ENCODE measurements at regions of chr1 and their contacts with region 1.

Region 1: DNA sequence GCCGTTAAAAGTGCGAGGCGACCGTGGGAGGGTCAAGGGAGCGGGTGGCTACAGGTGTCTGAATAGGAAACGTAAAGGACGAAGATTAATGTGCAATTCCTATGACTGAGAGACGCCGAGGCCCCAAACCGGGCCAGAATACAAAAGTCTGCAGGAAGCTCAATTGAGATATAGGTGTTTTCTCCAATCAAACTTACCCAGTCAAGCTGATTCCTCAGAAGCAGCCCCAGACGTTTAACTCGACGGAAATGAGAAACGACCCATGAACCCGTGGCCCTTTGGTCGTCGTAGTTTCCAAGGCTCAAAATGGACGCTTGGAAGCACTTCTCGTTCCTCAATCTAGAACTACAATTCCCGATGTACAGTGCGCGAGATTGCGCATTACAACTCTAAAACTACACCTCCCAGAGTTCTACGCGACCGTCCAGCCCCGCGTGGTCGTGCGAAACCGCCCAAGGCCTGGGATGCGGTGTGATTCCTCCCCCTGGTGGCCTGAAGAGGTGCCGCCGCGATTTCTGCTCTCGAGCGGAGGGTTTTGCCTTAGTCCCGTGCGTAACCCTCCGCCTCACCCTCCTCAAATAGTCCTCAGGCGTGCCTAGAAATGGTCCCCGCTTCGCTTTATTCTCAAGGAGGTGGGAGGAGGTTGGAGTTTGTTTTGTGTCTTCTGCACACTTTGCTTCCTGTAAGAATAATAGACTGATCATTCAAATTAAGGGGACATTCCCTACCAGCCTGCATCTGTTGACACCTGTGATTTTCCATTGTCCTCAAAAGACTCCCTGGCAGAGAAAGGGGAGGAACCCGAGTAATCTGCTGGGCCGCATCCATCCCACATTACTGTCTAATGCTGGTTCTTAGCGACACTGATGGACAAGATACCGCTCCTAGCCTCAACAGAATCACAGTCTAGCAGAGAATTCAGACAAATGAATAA is at the start of gene PAFAH2:
- DNase-seq: peak; percentile 95 to 100 (median 96)
- ATAC-seq: peak; percentile 97
- H3K4me3 ChIP-seq: peak within 1 kb of the TSS; percentile 43
- H3K27ac ChIP-seq: peak within 1 kb of the TSS; percentile 59
- H3K4me1 ChIP-seq: peaks cover 31 to 38% of the 10 kb centered on the region in 2 experiments
- H3K27me3 ChIP-seq: no peaks in the 10 kb centered on the region
- CTCF ChIP-seq: peak; percentile 98 to 100 (median 99)
- EP300 ChIP-seq: peak; percentile 76
- POLR2A ChIP-seq: peak; percentile 59
- RAD21 ChIP-seq: peak; percentile 100
- polyA plus RNA-seq, gene PAFAH2: 4.2 to 7.0 TPM

Region 2: GRCh38 chr1:25819576-25820246 is 178.4 kb before region 1 on chr1 and contains the start of gene MTFR1L:
- CTCF ChIA-PET with region 1: interaction called, 3 read pairs
- POLR2A ChIA-PET with region 1: interaction called, 3 read pairs
- in situ Hi-C with region 1: no loop called
- intact Hi-C with region 1: loop called (anchors 10 kb)
- DNase-seq: peak; percentile 98 to 99 (median 98)
- ATAC-seq: peak; percentile 88
- H3K4me3 ChIP-seq: peak within 1 kb of the TSS; percentile 67
- H3K27ac ChIP-seq: peak within 1 kb of the TSS; percentile 91
- H3K4me1 ChIP-seq: peaks cover 37 to 58% of the 10 kb centered on the region in 2 experiments
- H3K27me3 ChIP-seq: no peaks in the 10 kb centered on the region
- CTCF ChIP-seq: no peak
- EP300 ChIP-seq: peak; percentile 45; the same call in 1 of the 2 replicates
- POLR2A ChIP-seq: peak; percentile 92
- RAD21 ChIP-seq: no peak
- polyA plus RNA-seq, gene MTFR1L: 81.2 to 98.5 TPM

Region 3: DNA sequence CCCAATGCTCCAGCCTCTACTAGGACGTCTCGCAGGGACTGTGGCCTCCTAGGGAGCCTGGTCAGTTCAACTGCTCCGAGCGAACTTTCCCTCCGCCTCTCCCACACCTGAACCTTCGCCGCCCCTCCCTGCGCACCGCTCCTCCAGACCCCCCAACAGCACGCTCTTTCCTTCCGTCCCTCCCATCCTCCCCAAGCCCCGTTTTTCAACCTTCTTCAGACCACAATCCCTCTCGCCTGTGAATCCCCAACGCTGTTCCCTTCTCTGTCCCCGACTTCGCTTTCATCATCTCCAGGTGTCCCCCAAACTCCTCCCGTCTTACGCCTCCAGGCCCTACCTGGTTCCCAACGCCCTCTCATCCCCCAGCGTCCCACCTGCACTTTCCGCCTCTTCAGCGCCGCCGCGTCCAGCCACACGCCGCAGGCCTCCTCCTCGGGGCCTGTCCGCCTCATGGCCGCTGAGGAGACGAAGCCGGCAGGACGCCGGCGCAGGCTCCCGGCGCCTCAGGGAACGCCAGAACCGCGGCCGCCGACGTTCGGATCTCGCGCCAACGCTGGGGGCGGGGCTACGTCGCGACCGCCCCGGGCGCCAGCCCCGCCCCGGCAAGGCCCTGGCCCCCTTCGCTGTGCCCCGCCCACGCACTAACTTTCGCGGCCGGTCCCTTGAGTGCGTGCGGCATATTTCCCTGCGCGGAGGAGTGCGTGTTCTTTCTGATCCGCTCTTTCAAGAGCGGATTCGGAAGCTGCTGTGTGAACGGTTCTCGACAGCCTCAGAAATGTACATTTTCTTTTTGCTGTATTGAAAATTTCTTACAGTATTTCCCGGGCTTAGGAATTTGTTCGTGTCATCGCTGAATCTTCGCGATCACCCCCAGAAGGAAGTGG is 138.9 kb before region 1 on chr1 and contains the start of gene AUNIP:
- CTCF ChIA-PET with region 1: no interaction called
- POLR2A ChIA-PET with region 1: interaction called, 4 read pairs
- in situ Hi-C with region 1: no loop called
- intact Hi-C with region 1: loop called (anchors 1 kb)
- DNase-seq: peak; percentile 97 to 100 (median 98)
- ATAC-seq: peak; percentile 88
- H3K4me3 ChIP-seq: peak within 1 kb of the TSS; percentile 87
- H3K27ac ChIP-seq: peak within 1 kb of the TSS; percentile 92
- H3K4me1 ChIP-seq: peaks cover 49 to 60% of the 10 kb centered on the region in 2 experiments
- H3K27me3 ChIP-seq: no peaks in the 10 kb centered on the region
- CTCF ChIP-seq: 0 out of 6 replicates have a peak, but pooled peaks of 2 of the 3 experiments have one; percentile 12 to 15
- EP300 ChIP-seq: 0 out of 2 replicates have a peak, but pooled peaks have one; percentile 2
- POLR2A ChIP-seq: peak; percentile 97
- RAD21 ChIP-seq: peak in 1 of 2 experiments; percentile 23; a peak in 1 of 4 replicates
- polyA plus RNA-seq, gene AUNIP: 12.1 to 15.2 TPM

Region 4: GRCh38 chr1:25905680-25906643 is 92.1 kb before region 1 on chr1 and contains the start of gene STMN1:
- CTCF ChIA-PET with region 1: interaction called, 19 read pairs
- POLR2A ChIA-PET with region 1: interaction called, 22 read pairs
- in situ Hi-C with region 1: no loop called
- intact Hi-C with region 1: loop called (anchors 1 kb)
- DNase-seq: peak; percentile 97 to 99 (median 97)
- ATAC-seq: peak; percentile 94
- H3K4me3 ChIP-seq: peak within 1 kb of the TSS; percentile 78
- H3K27ac ChIP-seq: peak within 1 kb of the TSS; percentile 93
- H3K4me1 ChIP-seq: peaks cover 13 to 24% of the 10 kb centered on the region in 2 experiments; a peak in 4 of 5 replicates
- H3K27me3 ChIP-seq: no peaks in the 10 kb centered on the region
- CTCF ChIP-seq: no peak; a peak in 2 of 6 replicates
- EP300 ChIP-seq: peak; percentile 53
- POLR2A ChIP-seq: peak; percentile 97
- RAD21 ChIP-seq: peak in 1 of 2 experiments; percentile 20; a peak in 1 of 4 replicates
- polyA plus RNA-seq, gene STMN1: 2,090 to 2,153 TPM

Region 5: DNA sequence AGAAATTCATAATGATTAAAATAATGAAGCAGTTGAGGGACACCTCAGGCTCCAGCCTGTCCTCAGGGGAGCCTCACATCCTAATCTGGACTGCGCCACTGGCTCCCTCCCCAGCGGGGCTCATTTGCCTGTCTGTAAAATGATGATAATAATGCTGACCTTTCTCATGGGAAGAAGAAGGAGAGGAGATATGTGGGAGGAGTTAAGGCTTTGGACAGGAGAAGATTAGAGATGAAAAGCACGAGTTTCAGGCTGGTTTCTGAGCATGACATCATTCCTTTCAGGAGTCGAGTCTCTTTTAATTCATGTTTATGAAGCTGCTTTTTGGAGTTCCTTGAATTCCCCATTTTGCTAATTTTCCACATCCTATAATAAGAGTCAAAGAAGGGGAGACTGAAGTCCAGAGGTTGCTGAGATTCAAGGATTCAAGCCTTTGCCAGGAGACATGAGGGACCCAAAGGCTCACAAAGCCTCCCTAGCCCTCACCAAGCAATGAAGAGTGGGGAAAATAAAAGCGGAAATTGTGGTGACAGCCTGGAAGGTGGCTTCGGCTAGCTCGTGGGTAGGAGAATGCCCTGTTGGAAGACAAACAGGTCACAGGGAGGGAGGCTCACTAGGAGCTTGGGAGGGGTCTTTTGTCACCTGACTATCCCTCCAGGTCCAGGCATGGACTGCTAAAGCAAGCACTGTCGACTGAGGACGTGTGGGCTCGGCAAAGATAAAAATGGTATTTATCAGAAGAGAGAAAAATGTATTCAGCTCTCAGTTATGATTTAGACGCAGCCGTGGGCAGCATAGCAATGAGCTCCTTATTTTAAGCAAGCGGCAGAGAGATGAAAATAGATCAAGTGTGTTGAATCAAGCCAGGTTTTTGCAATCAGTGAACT is 64.4 kb before region 1 on chr1:
- CTCF ChIA-PET with region 1: no interaction called
- POLR2A ChIA-PET with region 1: interaction called, 3 read pairs
- in situ Hi-C with region 1: no loop called
- intact Hi-C with region 1: loop called (anchors 1 kb)
- DNase-seq: peak; percentile 72 to 96 (median 84)
- ATAC-seq: peak; percentile 96
- H3K4me3 ChIP-seq: peak overlapping the region; percentile 4
- H3K27ac ChIP-seq: peak overlapping the region; percentile 87
- H3K4me1 ChIP-seq: peaks cover 20 to 31% of the 10 kb centered on the region in 2 experiments
- H3K27me3 ChIP-seq: no peaks in the 10 kb centered on the region
- CTCF ChIP-seq: 0 out of 6 replicates have a peak, but pooled peaks of 1 of the 3 experiments have one; percentile 9
- EP300 ChIP-seq: peak; percentile 92
- POLR2A ChIP-seq: peak; percentile 65
- RAD21 ChIP-seq: peak in 1 of 2 experiments; percentile 19; a peak in 1 of 4 replicates